ENCODE measurements at regions of chr6 and their contacts with region 1.

Region 1: DNA sequence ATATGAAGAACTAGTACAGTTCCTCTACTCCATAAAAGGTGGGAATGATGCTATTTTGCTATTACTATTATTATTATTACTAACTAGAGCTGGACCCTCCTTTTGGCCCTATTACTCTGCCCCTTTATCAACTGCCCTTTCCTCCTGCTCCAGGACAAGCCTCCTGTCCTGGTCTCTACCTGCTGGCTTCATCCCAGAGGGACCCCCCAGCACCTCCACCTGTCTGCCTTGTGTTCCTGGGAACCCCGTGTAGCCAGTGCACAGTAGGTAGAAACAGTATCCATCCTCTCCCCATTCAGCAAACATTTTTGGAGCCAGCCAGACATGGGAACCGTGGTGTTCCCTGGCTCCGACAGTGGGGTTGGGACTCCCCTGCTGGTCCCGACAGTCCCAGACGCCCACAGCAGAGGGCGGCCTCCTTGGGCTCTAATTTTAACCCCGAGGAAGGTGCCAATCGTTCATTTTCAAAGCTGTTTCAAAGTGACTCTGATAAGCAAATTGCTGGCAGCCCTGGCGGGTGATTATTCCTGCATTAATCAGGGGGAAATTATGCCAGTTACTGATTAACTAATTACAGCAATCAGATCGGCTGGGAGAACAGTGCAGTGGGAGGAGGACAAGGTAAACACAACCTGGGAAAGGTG is 44.2 kb upstream of the MDGA1 start:
- DNase-seq: peak in 1 of 2 experiments; percentile 69
- H3K4me3 ChIP-seq: no peak overlapping the region
- H3K27ac ChIP-seq: no peak overlapping the region
- H3K4me1 ChIP-seq: no peaks in the 10 kb centered on the region
- H3K27me3 ChIP-seq: peaks cover 0 to 23% (median 16%) of the 10 kb centered on the region in 4 experiments; a peak in 5 of 7 replicates
- CTCF ChIP-seq: peak; percentile 69 to 74 (median 72)
- EP300 ChIP-seq: no peak
- POLR2A ChIP-seq: no peak
- RAD21 ChIP-seq: peak; percentile 56 to 73

Region 2: DNA sequence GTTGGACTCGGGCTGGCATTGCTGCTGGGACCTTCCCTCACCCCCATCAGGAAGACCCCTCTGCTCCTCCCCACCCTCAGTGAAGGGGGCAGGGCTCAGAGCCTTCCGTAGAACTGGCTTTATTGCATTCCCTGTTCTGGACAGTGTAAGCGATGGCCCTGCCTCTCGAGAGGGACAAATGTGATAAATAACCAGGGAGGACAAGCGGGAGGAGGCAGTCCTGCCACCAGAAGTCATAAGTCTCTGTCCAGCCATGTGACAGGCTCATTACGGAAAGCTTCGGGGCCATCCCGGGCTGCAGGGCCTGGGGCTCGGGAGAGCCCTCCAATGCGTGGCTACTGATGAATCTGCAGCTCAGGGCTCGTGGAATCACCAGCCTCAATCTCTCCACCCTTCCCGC is 14.3 kb after region 1 on chr6:
- CTCF ChIA-PET with region 1: interaction called, 33 read pairs
- POLR2A ChIA-PET with region 1: no interaction called
- DNase-seq: no peak
- H3K4me3 ChIP-seq: no peak overlapping the region
- H3K27ac ChIP-seq: no peak overlapping the region
- H3K4me1 ChIP-seq: no peaks in the 10 kb centered on the region
- H3K27me3 ChIP-seq: peaks cover 49 to 75% (median 72%) of the 10 kb centered on the region in 4 experiments
- CTCF ChIP-seq: no peak
- EP300 ChIP-seq: no peak
- POLR2A ChIP-seq: no peak
- RAD21 ChIP-seq: no peak

Region 3: DNA sequence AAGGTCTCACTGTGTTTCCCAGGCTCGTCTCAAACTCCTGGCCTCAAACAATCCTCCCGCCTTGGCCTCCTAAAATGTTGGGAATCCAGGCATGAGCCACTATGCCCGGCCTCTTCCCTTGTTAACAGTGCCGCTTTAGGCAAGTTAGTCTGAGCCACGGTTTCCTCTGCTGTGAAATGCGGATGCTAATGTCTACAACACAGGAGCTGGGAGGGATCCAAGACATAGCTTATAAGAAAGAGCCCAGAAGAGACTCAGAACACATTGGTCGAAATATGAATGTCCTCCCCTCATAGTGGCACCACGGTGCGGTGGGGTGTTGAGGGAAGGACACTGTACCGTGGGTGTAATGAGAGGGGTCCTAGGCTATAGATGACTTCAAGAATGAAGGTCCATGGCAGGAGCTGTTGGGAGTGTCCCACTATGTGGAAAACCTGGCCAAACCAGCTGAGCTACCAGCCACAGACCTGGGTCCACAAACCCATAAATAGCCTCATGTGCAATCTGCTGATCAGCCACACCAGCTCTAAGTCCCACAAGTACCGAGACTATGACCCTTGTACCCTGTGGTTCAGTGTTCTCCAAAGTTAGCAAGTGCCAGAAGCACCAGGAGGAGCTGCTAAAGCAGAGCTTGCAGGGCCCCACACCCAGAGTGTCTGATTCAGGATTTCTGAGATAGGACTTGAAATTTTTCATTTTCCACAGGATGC is 19.8 kb after region 1 on chr6:
- CTCF ChIA-PET with region 1: interaction called, 33 read pairs
- POLR2A ChIA-PET with region 1: no interaction called
- DNase-seq: no peak
- H3K4me3 ChIP-seq: no peak overlapping the region
- H3K27ac ChIP-seq: no peak overlapping the region
- H3K4me1 ChIP-seq: no peaks in the 10 kb centered on the region; a peak in 2 of 7 replicates
- H3K27me3 ChIP-seq: peaks cover 86 to 98% (median 95%) of the 10 kb centered on the region in 4 experiments
- CTCF ChIP-seq: no peak
- EP300 ChIP-seq: no peak
- POLR2A ChIP-seq: no peak
- RAD21 ChIP-seq: no peak

Region 4: GRCh38 chr6:37783856-37784584 is 42.1 kb after region 1 on chr6:
- CTCF ChIA-PET with region 1: interaction called, 16 read pairs
- POLR2A ChIA-PET with region 1: interaction called, 4 read pairs
- DNase-seq: peak in 1 of 2 experiments; percentile 66
- H3K4me3 ChIP-seq: peak overlapping the region; percentile 44 to 73 (median 66)
- H3K27ac ChIP-seq: 0 out of 2 replicates have a peak overlapping the region, but pooled peaks have one; percentile 14
- H3K4me1 ChIP-seq: peaks cover 1 to 36% (median 20%) of the 10 kb centered on the region in 4 experiments
- H3K27me3 ChIP-seq: peaks cover 0 to 18% (median 14%) of the 10 kb centered on the region in 4 experiments; a peak in 6 of 7 replicates
- CTCF ChIP-seq: no peak
- EP300 ChIP-seq: no peak
- POLR2A ChIP-seq: peak in 1 of 2 experiments; percentile 52; a peak in 2 of 3 replicates
- RAD21 ChIP-seq: no peak